Activated B cell treated with CpG ODN at 0.5 μM for 24 hours (primary cell): ENCODE measurements at regions of chr7 and their contacts with region 1.

Region 1: DNA sequence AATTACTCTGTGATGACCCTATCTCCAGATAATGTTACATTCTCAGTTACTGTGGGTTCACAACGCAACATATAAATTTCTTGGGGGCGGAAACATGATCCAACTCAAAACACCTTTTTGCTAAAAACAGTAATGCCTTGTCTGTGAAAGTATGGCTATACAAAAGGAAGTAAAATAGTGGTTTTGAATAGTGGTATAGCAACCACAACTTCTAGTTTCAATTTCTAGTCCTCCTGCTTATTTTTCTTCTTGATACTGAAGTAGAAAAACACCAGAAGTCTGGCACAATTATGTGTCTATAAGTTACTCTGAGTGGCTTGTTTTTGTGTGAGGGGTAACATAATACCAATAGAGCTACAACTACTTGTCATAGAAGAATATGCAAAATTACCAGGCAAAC is 21.5 kb upstream of the ZNF800 start:
- DNase-seq: no peak
- ATAC-seq: peak; percentile 67
- H3K4me3 Mint-ChIP-seq: peak overlapping the region; percentile 16
- H3K27ac Mint-ChIP-seq: peak overlapping the region; percentile 76
- H3K4me1 Mint-ChIP-seq: peaks cover 75% of the 10 kb centered on the region
- H3K27me3 Mint-ChIP-seq: no peaks in the 10 kb centered on the region
- CTCF ChIP-seq: no peak

Region 2: DNA sequence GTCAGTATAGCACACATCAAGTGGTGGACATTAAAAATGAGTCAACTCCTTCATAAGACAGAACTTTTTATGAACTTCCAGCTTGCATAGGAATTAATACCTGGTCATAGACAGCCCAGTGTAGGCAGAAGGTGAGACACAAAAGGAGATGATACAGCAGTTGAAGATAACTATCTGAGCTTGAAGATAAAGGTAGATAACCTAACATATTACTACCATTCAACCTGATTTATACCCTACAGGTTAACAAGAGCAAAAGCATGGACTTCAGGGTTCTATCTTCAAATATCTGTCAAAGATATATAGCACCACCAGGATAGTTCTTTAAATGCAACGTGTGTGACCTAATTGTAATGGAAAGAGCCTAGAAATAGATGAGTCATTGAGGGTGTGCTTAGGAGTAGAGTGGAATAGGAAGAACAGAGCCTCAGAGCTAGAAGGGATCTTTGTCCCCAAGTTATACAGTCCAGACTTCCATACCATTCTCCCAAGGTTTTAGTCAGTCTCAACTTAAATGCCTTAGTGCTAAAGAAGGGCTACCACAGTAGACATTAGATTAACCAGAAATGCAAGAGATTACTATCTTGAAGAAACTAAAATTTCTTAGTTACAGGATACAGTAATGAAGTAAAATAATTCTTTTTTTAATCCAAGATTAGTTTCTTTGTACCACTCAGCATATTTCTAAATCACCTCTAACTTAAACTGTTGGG is 30.7 kb before region 1 on chr7:
- CTCF ChIA-PET with region 1: no interaction called
- POLR2A ChIA-PET with region 1: no interaction called
- intact Hi-C with region 1: loop called (anchors 5 kb)
- DNase-seq: no peak
- ATAC-seq: no peak
- H3K4me3 Mint-ChIP-seq: no peak overlapping the region
- H3K27ac Mint-ChIP-seq: no peak overlapping the region
- H3K4me1 Mint-ChIP-seq: peaks cover 57% of the 10 kb centered on the region
- H3K27me3 Mint-ChIP-seq: no peaks in the 10 kb centered on the region
- CTCF ChIP-seq: no peak

Region 3: GRCh38 chr7:127437852-127438251 is 23.9 kb after region 1 on chr7:
- CTCF ChIA-PET with region 1: no interaction called
- POLR2A ChIA-PET with region 1: no interaction called
- intact Hi-C with region 1: no loop called
- DNase-seq: no peak
- ATAC-seq: no peak
- H3K4me3 Mint-ChIP-seq: no peak overlapping the region
- H3K27ac Mint-ChIP-seq: no peak overlapping the region
- H3K4me1 Mint-ChIP-seq: no peaks in the 10 kb centered on the region
- H3K27me3 Mint-ChIP-seq: peaks cover 10% of the 10 kb centered on the region
- CTCF ChIP-seq: no peak